ENCODE measurements at regions of chr16 and their contacts with region 1.

Region 1: DNA sequence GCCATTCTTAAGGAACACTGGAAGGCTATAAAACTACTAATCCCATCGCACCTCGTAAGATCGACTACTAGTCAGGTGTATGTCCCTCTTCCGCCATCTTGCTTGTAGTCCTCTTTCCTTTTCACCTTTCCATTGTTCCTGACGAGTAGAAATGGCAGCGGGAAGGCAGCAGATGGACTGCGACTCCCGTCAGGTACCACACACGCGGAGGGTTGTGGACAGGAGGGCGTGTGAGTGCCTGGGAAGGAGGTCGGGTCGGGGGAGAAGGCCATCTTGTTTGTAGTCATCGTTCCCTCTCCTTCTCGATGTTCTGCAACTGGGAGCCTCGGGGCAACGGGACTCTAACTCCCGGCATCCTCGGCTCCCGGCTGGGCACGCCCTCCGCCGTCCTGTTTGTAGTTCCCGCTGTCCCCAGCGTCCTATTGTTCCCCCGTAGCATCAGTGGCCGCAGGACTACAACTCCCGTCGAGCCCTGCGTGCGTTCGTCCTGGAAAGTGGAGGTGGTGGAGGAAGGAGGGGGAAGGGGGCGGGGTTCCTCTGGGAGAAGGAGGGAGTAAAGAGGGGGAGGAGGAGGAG is 324 bp upstream of the FBXL19 start:
- DNase-seq: peak; percentile 99 to 100
- H3K4me3 ChIP-seq: peak overlapping the region; percentile 71 to 82
- H3K27ac ChIP-seq: peak overlapping the region; percentile 95 to 97
- H3K4me1 ChIP-seq: peaks cover 3 to 4% of the 10 kb centered on the region in 2 donors
- H3K27me3 ChIP-seq: no peaks in the 10 kb centered on the region
- CTCF ChIP-seq: no peak

Region 2: DNA sequence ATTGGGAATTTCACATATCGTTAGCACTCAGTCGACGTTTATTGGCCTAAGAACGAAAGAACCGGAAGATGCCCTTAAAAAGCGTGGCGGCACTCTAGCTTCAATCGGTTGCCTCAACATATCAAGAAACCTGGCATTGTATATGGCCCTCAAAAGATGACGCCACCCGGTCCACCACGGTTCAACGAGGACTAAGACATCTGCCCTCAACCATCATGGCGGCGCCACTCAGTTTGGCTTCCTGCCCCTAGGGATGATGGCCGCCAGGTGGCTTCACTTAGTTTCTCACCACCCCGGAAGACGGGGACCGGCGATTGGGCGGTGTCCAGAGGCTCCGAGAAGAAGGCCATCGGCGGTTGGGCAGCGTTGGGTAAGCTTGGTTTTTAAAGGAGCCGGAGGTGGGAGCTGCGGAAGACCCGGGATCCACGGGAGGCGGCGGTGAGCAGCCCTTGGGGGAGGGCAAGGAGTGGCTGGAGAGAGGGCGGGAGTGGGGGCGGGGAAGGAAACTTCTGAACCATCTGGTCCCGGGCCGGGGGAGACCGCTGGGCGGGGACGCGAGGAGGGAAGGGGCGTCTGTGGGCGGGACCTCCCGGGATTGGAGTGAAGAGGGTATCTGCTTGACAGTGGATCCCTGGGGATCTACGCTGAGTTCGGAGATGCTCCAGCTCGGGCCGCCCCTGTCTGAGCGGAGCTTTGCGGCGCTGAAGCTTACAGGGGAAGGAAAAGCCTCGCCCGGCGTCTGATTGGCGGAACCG is 272.5 kb before region 1 on chr16 and contains the start of gene PRR14:
- intact Hi-C with region 1: loop called (anchors 2 kb)
- DNase-seq: peak; percentile 99 to 100
- H3K4me3 ChIP-seq: peak within 1 kb of the TSS; percentile 74 to 91
- H3K27ac ChIP-seq: peak within 1 kb of the TSS; percentile 95
- H3K4me1 ChIP-seq: peaks cover 6 to 18% of the 10 kb centered on the region in 2 donors
- H3K27me3 ChIP-seq: no peaks in the 10 kb centered on the region
- CTCF ChIP-seq: peak in 2 of 3 experiments; percentile 33 to 67
- total RNA-seq, gene PRR14: 124 TPM

Region 3: GRCh38 chr16:30874821-30875717 is 48.0 kb before region 1 on chr16:
- intact Hi-C with region 1: loop called (anchors 1 kb)
- DNase-seq: peak; percentile 39 to 94
- H3K4me3 ChIP-seq: peak overlapping the region; percentile 69 to 84
- H3K27ac ChIP-seq: peak overlapping the region; percentile 76 to 79
- H3K4me1 ChIP-seq: peaks cover 3 to 17% of the 10 kb centered on the region in 2 donors
- H3K27me3 ChIP-seq: no peaks in the 10 kb centered on the region
- CTCF ChIP-seq: no peak

Region 4: GRCh38 chr16:30941600-30942425 is 18.8 kb after region 1 on chr16:
- intact Hi-C with region 1: loop called (anchors 2 kb)
- DNase-seq: no peak
- H3K4me3 ChIP-seq: no peak overlapping the region
- H3K27ac ChIP-seq: peak overlapping the region; percentile 19 to 27
- H3K4me1 ChIP-seq: peaks cover 0 to 11% of the 10 kb centered on the region in 2 donors
- H3K27me3 ChIP-seq: no peaks in the 10 kb centered on the region
- CTCF ChIP-seq: peak; percentile 81 to 92 (median 91)

Region 5: DNA sequence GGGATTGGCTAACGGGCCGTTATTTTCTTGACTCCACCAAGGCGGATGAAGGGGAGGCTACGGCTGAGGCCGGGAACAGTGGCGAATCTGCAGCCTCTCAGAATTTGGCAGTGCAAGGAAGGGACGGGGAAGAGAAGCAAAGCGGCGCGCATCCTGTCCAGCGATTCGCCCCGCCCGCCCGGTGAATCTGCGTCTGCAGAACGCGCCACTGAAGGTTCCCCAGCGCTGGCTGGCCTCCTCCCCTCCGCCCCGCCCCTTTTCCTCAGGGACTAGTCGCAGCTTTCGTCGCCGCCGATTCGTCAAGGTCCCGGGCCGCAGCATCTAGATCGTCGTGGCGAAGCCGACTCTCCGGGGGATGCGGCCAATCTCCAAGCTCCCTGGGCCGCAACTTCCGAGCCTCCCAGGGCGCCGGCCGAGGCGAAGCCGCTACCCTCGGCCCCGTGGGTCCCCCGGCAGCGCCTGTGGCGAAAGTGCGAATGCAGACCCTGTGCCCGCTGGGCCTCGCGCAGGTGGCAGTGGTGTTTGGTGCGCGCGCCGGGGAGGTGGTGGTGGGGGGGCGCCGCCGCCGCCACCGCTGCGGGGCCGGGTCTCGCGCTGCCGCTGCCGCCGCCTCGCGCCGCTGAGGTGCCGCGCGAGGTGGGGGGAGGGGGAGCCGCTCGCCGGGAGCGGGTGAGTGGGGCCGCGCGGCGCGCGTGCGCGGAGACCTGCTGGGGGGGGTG is 34.6 kb after region 1 on chr16 and contains the start of gene SETD1A:
- intact Hi-C with region 1: loop called (anchors 1 kb)
- DNase-seq: peak; percentile 81 to 98
- H3K4me3 ChIP-seq: peak within 1 kb of the TSS; percentile 94 to 95
- H3K27ac ChIP-seq: peak within 1 kb of the TSS; percentile 98 to 99
- H3K4me1 ChIP-seq: peaks cover 3 to 22% of the 10 kb centered on the region in 2 donors
- H3K27me3 ChIP-seq: no peaks in the 10 kb centered on the region
- CTCF ChIP-seq: peak in 1 of 3 experiments; percentile 11
- total RNA-seq, gene SETD1A: 8.3 TPM

Region 6: GRCh38 chr16:31108035-31108793 is 185.2 kb after region 1 on chr16 and contains the start of gene BCKDK:
- intact Hi-C with region 1: no loop called
- DNase-seq: peak in 1 of 2 donors; percentile 85
- H3K4me3 ChIP-seq: peak within 1 kb of the TSS; percentile 90 to 99
- H3K27ac ChIP-seq: peak within 1 kb of the TSS; percentile 92 to 97
- H3K4me1 ChIP-seq: peaks cover 9 to 17% of the 10 kb centered on the region in 2 donors
- H3K27me3 ChIP-seq: no peaks in the 10 kb centered on the region
- CTCF ChIP-seq: no peak
- total RNA-seq, gene BCKDK: 85.8 TPM

Measured in ascending aorta (tissue), 2 donors.